MCF 10A (cell line): ENCODE measurements at regions of chr7 and their contacts with region 1.

Region 1: GRCh38 chr7:99740573-99741440 is 5.8 kb upstream of the CYP3A7 start:
- DNase-seq: peak; percentile 78
- H3K4me3 Mint-ChIP-seq: peak overlapping the region; percentile 31
- H3K27ac Mint-ChIP-seq: peak overlapping the region; percentile 87
- H3K4me1 Mint-ChIP-seq: peaks cover 47% of the 10 kb centered on the region
- H3K27me3 Mint-ChIP-seq: no peaks in the 10 kb centered on the region
- CTCF ChIP-seq: no peak

Region 2: GRCh38 chr7:99616359-99617191 is 124.2 kb before region 1 on chr7 and contains the start of gene ZSCAN25:
- CTCF ChIA-PET with region 1: interaction called, 3 read pairs
- POLR2A ChIA-PET with region 1: interaction called, 37 read pairs
- intact Hi-C with region 1: no loop called
- DNase-seq: peak; percentile 91
- H3K4me3 Mint-ChIP-seq: peak within 1 kb of the TSS; percentile 90
- H3K27ac Mint-ChIP-seq: peak within 1 kb of the TSS; percentile 93
- H3K4me1 Mint-ChIP-seq: peaks cover 24% of the 10 kb centered on the region
- H3K27me3 Mint-ChIP-seq: no peaks in the 10 kb centered on the region
- CTCF ChIP-seq: no peak
- total RNA-seq, gene ZSCAN25: 17.6 and 20.9 TPM in 2 replicates

Region 3: DNA sequence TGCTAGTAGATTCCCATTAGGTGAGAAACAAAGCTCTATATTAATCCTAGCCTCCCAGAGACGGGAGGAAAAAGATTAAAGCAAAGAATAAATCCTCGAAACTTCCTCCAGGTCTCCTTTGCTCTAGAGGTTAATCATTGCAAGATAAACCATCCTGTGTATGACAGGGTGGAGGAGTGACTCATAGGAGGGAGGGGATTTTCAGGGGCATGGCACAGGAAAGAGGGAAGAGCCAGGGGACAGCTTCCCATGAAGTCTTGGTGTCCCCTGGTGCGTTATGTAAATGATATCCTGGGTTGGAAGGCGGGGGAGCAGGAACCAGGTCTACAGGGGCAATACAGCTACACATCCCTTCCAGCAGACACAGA is 61.8 kb before region 1 on chr7:
- CTCF ChIA-PET with region 1: interaction called, 5 read pairs
- POLR2A ChIA-PET with region 1: interaction called, 11 read pairs
- intact Hi-C with region 1: no loop called
- DNase-seq: peak; percentile 42
- H3K4me3 Mint-ChIP-seq: no peak overlapping the region
- H3K27ac Mint-ChIP-seq: no peak overlapping the region
- H3K4me1 Mint-ChIP-seq: peaks cover 16% of the 10 kb centered on the region
- H3K27me3 Mint-ChIP-seq: no peaks in the 10 kb centered on the region
- CTCF ChIP-seq: no peak

Region 4: GRCh38 chr7:99752390-99752789 is 11.6 kb after region 1 on chr7:
- CTCF ChIA-PET with region 1: no interaction called
- POLR2A ChIA-PET with region 1: interaction called, 46 read pairs
- intact Hi-C with region 1: no loop called
- DNase-seq: no peak
- H3K4me3 Mint-ChIP-seq: peak overlapping the region; percentile 37
- H3K27ac Mint-ChIP-seq: peak overlapping the region; percentile 9
- H3K4me1 Mint-ChIP-seq: peaks cover 24% of the 10 kb centered on the region
- H3K27me3 Mint-ChIP-seq: no peaks in the 10 kb centered on the region
- CTCF ChIP-seq: no peak

Region 5: DNA sequence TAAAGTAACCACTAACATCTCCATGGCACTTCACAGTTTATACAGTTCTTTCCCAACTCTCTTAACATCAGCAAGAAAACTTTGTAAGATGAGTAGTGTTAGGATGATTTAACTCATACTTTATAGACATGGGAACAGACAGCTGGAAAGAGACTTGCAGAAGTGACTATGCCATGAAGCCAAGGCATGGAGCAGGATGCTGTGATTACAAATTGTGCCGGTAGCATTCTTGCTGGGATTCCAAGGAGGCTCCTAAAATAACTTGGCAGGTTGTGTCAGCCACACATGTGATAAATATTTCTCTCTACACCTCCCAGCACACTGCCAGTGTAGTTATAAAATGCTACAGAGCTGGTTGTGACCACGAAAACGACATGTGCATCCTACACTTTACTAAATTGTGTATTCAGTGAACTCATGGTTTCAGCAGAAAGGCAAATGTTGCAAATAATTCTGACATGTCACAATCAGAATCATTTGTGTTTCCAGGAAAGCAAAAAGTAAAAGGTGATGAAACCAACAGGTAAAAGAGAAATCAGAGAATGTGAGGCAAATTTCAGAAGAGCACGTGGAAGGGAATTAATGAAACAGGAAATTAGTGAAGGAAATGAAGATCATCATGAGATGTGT is 48.7 kb after region 1 on chr7:
- CTCF ChIA-PET with region 1: no interaction called
- POLR2A ChIA-PET with region 1: interaction called, 12 read pairs
- intact Hi-C with region 1: no loop called
- DNase-seq: no peak
- H3K4me3 Mint-ChIP-seq: no peak overlapping the region
- H3K27ac Mint-ChIP-seq: peak overlapping the region; percentile 4
- H3K4me1 Mint-ChIP-seq: peaks cover 22% of the 10 kb centered on the region
- H3K27me3 Mint-ChIP-seq: no peaks in the 10 kb centered on the region
- CTCF ChIP-seq: no peak

Region 6: DNA sequence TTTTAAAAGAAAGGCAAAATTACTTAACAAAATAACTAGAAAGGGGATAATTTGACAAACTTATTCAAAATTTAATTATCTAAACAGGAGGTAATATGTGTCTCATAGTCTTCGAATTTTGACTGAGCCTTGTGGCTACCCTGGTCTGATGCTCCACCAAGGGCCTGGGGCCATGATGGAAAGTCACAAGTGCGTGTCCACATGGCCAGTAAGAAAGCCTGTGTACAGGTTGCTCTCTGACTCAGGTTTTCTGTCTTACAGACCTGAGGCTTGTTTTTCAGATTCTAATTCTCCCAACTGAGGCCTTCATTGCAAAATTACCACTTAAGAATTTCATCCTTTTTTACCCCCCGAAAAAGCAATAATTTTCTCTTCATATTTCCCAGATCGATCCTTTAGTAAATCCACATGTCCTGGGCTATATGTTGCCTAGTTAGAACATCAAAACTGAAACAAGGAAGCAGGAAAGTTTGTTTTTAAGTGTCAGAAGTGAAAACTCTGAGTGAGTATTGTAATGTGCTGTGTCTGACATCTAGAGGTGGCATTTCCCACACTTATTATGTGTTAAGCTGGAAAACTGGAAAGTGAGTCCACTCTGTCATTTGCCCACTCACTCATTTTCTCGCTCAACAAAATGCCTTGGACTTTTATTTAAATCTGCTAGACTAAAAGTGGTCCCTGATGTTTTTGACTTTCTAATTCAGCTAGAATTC is 97.0 kb after region 1 on chr7:
- CTCF ChIA-PET with region 1: interaction called, 7 read pairs
- POLR2A ChIA-PET with region 1: interaction called, 28 read pairs
- intact Hi-C with region 1: loop called (anchors 5 kb)
- DNase-seq: peak; percentile 30
- H3K4me3 Mint-ChIP-seq: no peak overlapping the region
- H3K27ac Mint-ChIP-seq: peak overlapping the region; percentile 36
- H3K4me1 Mint-ChIP-seq: peaks cover 7% of the 10 kb centered on the region
- H3K27me3 Mint-ChIP-seq: no peaks in the 10 kb centered on the region
- CTCF ChIP-seq: peak; percentile 48